PC-9 (cell line): ENCODE measurements at regions of chr18 and their contacts with region 1.

Region 1: DNA sequence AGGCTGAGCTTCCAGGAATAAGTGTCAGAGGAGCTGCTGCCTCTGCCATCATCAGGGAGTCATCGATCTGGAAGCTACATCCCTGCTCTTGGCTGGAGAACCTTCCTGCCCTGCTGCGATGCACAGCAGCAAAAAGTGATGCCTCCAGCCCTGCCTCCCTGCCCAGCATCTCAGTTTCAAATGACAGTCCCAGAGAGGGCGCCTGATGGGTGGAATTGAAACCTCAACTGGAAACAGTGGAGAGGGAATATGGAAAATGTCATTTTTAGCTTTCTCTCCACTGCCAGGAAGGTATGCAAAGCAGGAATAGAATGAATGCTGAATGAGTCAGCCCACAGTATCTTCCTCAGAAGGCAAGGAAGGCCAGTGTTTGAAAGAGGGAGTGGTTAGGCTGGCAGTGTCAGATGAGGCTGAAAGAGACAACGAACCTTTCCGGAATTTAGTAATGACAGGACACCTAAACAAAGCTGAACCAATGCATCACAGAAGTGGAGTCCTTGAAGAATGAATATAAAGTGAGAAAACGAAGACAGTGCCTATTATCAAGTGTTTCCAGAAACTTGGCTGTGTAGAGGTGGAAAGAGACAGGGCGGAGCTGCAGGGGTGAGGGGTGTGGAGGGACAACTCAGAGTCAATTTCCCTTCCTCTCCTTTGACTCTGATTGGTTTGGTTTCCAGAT is 153.9 kb upstream of the NDUFV2 start:
- DNase-seq: peak; percentile 54 to 80
- H3K4me3 ChIP-seq: no peak overlapping the region
- H3K27ac ChIP-seq: peak overlapping the region; percentile 20; the same call in 1 of the 2 replicates
- H3K4me1 ChIP-seq: peaks cover 53% of the 10 kb centered on the region
- H3K27me3 ChIP-seq: no peaks in the 10 kb centered on the region
- CTCF ChIP-seq: no peak

Region 2: GRCh38 chr18:8890957-8891464 is 57.6 kb before region 1 on chr18:
- CTCF ChIA-PET with region 1: no interaction called
- POLR2A ChIA-PET with region 1: no interaction called
- intact Hi-C with region 1: loop called (anchors 2 kb)
- DNase-seq: peak; percentile 79 to 99
- H3K4me3 ChIP-seq: no peak overlapping the region
- H3K27ac ChIP-seq: peak overlapping the region; percentile 51
- H3K4me1 ChIP-seq: peaks cover 17% of the 10 kb centered on the region
- H3K27me3 ChIP-seq: no peaks in the 10 kb centered on the region
- CTCF ChIP-seq: no peak